ENCODE measurements at regions of chr19 and their contacts with region 1.

Region 1: DNA sequence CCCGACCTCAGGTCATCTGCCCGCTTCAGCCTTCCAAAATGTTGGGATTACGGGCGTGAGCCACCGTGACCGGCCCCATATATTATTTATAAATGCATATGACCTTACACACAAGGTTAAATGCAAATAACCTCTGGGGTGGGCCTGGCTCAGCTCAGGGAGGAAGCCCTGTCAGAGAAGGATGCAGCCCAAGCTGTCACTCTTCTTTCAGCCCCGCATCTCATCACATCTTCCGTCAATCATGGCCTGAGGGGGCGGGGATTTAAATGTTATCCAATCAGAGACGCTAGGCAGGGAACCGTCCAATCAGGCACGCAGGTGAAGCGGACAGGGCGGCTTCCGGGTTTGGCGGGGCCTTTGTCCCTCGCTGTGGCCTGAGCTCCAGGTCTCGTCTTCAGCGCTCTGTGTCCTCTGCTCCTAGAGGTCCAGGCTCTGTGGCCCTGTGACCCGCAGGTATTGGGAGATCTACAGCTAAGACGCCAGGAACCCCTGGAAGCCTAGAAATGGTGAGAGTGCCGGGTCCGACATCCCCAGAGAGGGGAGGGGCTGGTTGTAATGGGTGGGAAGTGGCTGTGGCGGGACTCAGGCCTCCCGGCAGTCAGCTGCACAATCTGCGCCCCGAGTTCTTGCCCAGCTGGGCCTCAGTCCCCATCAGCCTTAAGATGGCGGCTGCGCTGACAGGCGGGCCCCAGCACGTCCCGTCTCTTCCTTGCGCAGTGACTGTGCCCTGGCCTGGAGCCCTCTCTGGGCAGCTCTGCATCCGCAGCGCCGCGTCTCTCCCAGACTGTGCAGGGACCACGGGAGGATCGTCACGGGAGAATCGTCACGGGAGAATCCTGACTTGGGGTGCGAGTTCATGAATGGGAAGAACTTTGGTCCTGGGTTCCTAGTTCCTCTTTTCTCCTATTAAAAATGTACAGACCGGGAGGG is at the start of gene ZNF430:
- DNase-seq: peak; percentile 77
- ATAC-seq: peak; percentile 95
- H3K4me3 Mint-ChIP-seq: peak within 1 kb of the TSS; percentile 100
- H3K27ac Mint-ChIP-seq: peak within 1 kb of the TSS; percentile 100
- H3K4me1 Mint-ChIP-seq: peaks cover 50% of the 10 kb centered on the region
- H3K27me3 Mint-ChIP-seq: no peaks in the 10 kb centered on the region
- CTCF ChIP-seq: no peak
- total RNA-seq, gene ZNF430: 36.4 and 39.8 TPM in 2 replicates

Region 2: DNA sequence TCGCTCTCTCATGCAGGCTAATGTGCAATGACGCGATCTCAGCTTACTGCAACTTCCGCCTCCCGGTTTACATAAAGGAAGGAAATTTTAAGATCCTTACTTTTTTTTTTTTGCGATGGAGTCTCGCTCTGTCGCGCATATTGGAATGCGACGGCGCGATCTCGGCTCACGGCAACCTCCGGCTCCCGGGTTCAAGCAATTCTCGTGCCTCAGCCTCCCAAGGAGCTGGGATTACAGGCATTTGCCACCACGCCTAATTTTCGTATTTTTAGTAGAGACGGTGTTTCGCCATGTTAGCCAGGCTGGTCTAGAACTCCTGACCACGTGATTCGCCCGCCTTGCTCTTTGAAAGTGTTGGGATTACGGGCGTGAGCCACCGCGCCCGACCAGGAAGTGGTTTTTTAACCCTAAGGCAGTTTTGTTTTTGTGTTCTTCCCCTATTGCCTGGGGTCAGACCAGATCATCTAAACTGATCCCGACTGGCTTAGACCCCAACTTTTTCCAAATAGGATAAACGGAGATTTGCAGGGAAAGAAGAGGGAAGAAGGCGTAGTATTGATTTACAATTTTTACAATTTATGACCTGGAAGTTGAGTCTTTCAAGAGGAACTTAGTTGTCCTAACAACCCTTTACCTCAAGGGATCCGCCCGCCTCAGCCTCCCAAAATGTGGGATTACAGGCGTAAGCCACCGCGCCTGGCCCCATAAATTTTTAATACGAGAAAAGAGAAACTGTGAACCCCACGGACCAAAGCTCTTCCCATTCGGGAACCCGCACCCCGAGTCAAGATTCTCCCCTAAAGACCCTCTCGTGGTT is 597.0 kb before region 1 on chr19:
- CTCF ChIA-PET with region 1: no interaction called
- POLR2A ChIA-PET with region 1: interaction called, 11 read pairs
- intact Hi-C with region 1: loop called (anchors 10 kb)
- DNase-seq: peak; percentile 24
- ATAC-seq: no peak
- H3K4me3 Mint-ChIP-seq: peak overlapping the region; percentile 99
- H3K27ac Mint-ChIP-seq: peak overlapping the region; percentile 98
- H3K4me1 Mint-ChIP-seq: peaks cover 15% of the 10 kb centered on the region
- H3K27me3 Mint-ChIP-seq: no peaks in the 10 kb centered on the region
- CTCF ChIP-seq: no peak

Region 3: DNA sequence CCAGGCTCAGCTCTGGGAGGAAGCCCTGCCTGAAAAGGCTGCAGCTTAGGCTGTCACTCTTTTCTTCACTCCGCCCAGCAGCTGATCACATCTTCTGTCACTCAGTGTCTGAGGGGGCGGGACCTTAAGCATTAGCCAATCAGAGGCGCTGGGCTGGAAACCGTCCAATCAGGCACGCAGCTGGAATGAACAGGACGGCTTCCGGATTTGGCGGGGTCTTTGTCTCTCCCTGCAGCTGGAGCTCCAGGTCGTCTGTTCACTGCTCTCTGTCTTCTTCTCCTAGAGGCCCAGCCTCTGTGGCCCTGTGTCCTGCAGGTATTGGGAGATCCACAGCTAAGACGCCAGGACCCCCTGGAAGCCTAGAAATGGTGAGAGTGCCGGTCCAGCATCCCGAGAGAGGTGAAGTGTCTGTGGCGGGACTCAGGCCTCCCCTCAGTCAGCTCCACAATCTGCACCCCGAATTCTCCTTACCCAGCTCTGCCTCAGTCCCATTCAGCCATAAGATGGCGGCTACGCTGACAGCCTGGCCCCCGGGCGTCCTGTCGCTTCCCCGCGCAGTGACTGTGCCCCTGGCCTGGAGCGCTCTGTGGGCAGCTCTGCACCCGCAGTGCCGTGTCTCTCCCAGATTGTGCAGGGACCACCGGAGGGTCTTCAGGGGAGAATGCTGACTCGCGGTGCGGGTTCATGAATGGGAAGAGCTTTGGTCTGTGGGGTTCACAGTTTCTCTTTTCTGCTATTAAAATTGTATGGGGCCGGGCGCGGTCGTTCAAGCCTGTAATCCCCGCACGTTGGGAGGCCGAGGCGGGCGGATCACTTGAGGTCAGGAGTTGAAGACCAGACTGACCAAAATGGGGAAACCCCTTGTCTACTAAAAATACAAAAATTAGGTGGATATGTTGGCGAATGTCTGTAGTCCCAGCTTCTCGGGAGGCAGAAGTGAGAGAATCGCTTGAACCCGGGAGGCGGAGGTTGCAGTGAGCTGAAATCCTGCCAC is 244.2 kb before region 1 on chr19 and contains the start of gene ZNF66:
- CTCF ChIA-PET with region 1: no interaction called
- POLR2A ChIA-PET with region 1: interaction called, 6 read pairs
- intact Hi-C with region 1: loop called (anchors 5 kb)
- DNase-seq: peak; percentile 85
- ATAC-seq: peak; percentile 98
- H3K4me3 Mint-ChIP-seq: peak within 1 kb of the TSS; percentile 98
- H3K27ac Mint-ChIP-seq: peak within 1 kb of the TSS; percentile 91
- H3K4me1 Mint-ChIP-seq: peaks cover 10% of the 10 kb centered on the region
- H3K27me3 Mint-ChIP-seq: no peaks in the 10 kb centered on the region
- CTCF ChIP-seq: no peak
- total RNA-seq, gene ZNF66: 17.5 and 19.1 TPM in 2 replicates

Region 4: GRCh38 chr19:21082011-21082975 is 61.7 kb after region 1 on chr19 and contains the start of gene ZNF714:
- CTCF ChIA-PET with region 1: no interaction called
- POLR2A ChIA-PET with region 1: interaction called, 12 read pairs
- intact Hi-C with region 1: loop called (anchors 2 kb)
- DNase-seq: peak; percentile 63
- ATAC-seq: peak; percentile 100
- H3K4me3 Mint-ChIP-seq: peak within 1 kb of the TSS; percentile 100
- H3K27ac Mint-ChIP-seq: peak within 1 kb of the TSS; percentile 93
- H3K4me1 Mint-ChIP-seq: peaks cover 13% of the 10 kb centered on the region
- H3K27me3 Mint-ChIP-seq: no peaks in the 10 kb centered on the region
- CTCF ChIP-seq: no peak
- total RNA-seq, gene ZNF714: 11.1 and 12.5 TPM in 2 replicates

Region 5: DNA sequence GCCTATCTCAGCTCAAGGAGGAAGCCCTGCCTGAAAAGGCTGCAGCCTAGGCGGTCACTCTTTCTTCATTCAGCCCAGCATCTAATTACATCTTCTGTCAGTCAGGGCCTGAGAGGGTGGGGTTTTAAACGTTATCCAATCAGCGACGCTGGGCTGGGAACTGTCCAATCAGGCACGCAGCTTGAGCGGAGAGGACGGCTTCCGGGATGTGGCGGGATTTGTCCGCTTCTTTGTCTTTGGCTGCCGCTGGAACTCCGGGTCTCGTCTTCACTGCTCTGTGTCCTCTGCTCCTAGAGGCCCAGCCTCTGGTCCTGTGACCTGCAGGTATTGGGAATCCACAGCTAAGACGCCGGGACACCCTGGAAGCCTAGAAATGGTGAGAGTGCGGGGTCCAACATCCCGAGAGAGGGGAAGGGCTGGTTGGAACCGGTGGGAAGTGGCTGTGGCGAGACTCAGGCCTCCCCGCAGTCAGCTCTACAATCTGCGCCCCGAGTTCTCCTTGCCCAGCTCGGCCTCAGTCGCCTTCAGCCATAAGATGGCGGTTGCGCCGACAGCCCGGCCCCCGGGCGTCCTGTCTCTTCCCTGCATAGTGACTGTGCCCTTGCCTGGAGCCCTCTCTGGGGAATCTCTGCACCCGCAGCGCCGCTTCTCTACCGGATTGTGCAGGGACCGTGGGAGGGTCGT is 338.3 kb after region 1 on chr19 and contains the start of gene ZNF738:
- CTCF ChIA-PET with region 1: no interaction called
- POLR2A ChIA-PET with region 1: no interaction called
- intact Hi-C with region 1: loop called (anchors 10 kb)
- DNase-seq: peak; percentile 70
- ATAC-seq: peak; percentile 96
- H3K4me3 Mint-ChIP-seq: peak within 1 kb of the TSS; percentile 100
- H3K27ac Mint-ChIP-seq: peak within 1 kb of the TSS; percentile 96
- H3K4me1 Mint-ChIP-seq: peaks cover 13% of the 10 kb centered on the region
- H3K27me3 Mint-ChIP-seq: no peaks in the 10 kb centered on the region
- CTCF ChIP-seq: no peak
- total RNA-seq, gene ZNF738: 18.7 and 22.2 TPM in 2 replicates

Region 6: DNA sequence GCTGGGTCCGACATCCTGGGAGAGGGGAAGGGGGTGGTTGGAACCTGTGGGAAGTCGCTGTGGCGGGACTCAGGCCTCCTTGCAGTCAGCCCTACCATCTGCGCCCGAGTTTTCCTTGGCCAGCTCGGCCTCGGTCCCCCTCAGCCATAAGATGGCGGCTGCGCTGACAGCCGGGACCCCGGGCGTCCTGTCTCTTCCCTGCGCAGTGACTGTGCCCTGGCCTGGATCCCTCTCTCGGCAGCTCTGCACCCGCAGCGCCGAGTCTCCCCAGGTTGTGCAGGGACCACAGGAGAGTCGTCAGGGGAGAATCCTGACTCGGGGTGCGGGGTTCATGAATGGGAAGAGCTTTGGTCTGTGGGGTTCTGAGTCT is 1032.1 kb after region 1 on chr19:
- CTCF ChIA-PET with region 1: no interaction called
- POLR2A ChIA-PET with region 1: no interaction called
- intact Hi-C with region 1: loop called (anchors 5 kb)
- DNase-seq: no peak
- ATAC-seq: peak; percentile 43
- H3K4me3 Mint-ChIP-seq: peak overlapping the region; percentile 99
- H3K27ac Mint-ChIP-seq: peak overlapping the region; percentile 81
- H3K4me1 Mint-ChIP-seq: peaks cover 8% of the 10 kb centered on the region
- H3K27me3 Mint-ChIP-seq: no peaks in the 10 kb centered on the region
- CTCF ChIP-seq: no peak

Measured in activated B cell treated with CpG ODN at 0.5 μM for 24 hours (primary cell).